Ovary (tissue), 10 donors: ENCODE measurements at regions of chr20 and their contacts with region 1.

Region 1: GRCh38 chr20:62302341-62303058 is at the start of gene ADRM1:
- DNase-seq: peak; percentile 94 to 98 (median 95)
- H3K4me3 ChIP-seq: peak within 1 kb of the TSS; percentile 88
- H3K27ac ChIP-seq: peak within 1 kb of the TSS; percentile 88 to 98
- H3K4me1 ChIP-seq: peaks cover 11% of the 10 kb centered on the region
- H3K27me3 ChIP-seq: no peaks in the 10 kb centered on the region
- CTCF ChIP-seq: peak; percentile 87 to 99 (median 98)
- EP300 ChIP-seq: no peak
- POLR2A ChIP-seq: peak; percentile 37
- total RNA-seq, gene ADRM1: 42.8 to 109 (median 56.3) TPM

Region 2: DNA sequence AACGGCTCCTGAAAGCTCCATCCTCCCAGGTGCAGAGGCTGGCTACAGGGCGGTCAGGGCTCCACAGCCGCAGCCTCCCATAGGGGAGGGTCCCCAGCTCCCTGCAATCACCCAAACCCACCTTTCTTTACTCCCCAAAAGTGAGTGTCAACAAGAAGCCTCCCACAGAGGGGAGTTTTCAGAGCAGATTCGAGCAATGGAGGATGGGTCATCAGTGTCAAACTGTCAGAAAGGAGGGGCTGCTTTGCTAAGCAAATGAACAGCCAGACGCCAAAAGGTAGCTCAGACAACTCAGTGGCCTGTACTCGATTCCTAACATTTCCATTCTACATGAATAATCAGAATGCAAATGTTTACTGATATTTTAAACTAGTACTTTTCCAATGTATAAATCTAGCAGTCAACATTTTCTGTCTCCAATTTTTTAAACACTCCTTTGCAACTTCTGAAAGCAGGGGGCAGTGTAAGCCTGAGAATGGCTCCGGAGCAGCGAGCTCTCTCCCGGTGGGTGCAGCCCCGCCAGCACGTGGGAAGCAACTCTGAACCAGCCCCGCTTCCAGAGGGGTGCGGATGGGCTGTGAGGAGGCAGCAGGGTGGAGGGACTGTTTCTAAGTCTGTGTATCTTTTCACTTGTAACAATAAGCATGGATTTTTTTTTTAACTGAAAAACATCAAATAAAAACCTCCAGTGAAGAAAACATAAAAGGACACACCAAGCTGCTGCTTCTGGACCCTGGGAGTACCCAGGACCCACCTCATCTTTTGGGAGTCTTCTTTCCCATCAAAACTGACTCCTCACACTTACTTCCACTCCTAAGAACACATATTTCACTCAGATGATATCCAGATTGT is 291.7 kb before region 1 on chr20:
- intact Hi-C with region 1: loop called in 1 of 4 experiments (anchors 10 kb)
- DNase-seq: peak; percentile 54 to 72 (median 70)
- H3K4me3 ChIP-seq: no peak overlapping the region
- H3K27ac ChIP-seq: no peak overlapping the region
- H3K4me1 ChIP-seq: peaks cover 2% of the 10 kb centered on the region
- H3K27me3 ChIP-seq: no peaks in the 10 kb centered on the region
- CTCF ChIP-seq: peak; percentile 32 to 68 (median 60)
- EP300 ChIP-seq: no peak
- POLR2A ChIP-seq: no peak

Region 3: DNA sequence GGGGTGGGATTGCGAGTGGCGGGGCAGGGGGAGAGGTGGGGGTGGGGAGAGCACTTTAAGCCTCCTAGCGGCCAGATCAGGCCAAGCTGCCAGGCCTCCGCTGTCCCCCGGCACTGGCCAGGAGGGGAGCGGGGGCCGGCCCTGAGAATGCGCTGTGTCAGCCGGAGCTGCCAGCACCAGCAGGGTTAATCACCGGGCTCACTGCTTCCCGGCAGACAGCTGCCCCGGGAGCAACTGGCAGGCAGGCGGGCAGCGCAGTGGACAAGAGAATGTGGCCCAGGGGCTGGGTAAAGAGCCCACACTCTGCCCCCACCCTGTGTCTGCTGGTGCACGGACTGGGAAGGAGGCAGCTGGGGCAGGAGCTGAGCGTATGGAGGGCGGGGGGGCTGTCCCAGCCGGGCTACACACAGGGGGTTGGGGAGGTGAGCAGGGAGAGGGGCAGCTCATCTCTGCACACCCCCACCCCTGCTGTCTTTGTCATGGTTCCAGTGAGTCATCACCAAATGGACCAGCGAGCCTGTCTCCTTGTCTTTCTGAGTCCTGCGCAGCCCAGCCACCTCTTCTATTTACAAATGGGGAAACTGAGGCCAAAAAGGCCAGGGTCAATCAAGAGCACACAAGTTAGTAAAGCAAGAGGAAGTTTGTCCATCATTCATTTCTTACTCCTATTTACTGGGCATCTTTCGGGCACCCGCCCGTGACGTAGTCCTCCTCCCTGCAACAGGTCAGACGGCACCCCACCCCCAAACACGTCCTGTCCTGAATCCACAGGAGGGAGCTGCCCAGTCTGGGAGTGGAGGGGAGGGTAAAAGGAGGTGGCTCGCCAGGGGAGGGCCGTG is 66.7 kb after region 1 on chr20:
- intact Hi-C with region 1: loop called in 1 of 4 experiments (anchors 10 kb)
- DNase-seq: no peak
- H3K4me3 ChIP-seq: peak overlapping the region; percentile 10
- H3K27ac ChIP-seq: no peak overlapping the region
- H3K4me1 ChIP-seq: peaks cover 13% of the 10 kb centered on the region
- H3K27me3 ChIP-seq: peaks cover 5% of the 10 kb centered on the region
- CTCF ChIP-seq: no peak
- EP300 ChIP-seq: no peak
- POLR2A ChIP-seq: no peak

Region 4: GRCh38 chr20:62376112-62377063 is 73.9 kb after region 1 on chr20:
- intact Hi-C with region 1: loop called in 2 of 4 experiments (anchors 2 to 5 kb)
- DNase-seq: peak in 4 of 5 donors; percentile 63 to 78 (median 66)
- H3K4me3 ChIP-seq: no peak overlapping the region
- H3K27ac ChIP-seq: no peak overlapping the region
- H3K4me1 ChIP-seq: peaks cover 17% of the 10 kb centered on the region
- H3K27me3 ChIP-seq: no peaks in the 10 kb centered on the region
- CTCF ChIP-seq: peak; percentile 20 to 40 (median 34)
- EP300 ChIP-seq: no peak
- POLR2A ChIP-seq: no peak

Region 5: DNA sequence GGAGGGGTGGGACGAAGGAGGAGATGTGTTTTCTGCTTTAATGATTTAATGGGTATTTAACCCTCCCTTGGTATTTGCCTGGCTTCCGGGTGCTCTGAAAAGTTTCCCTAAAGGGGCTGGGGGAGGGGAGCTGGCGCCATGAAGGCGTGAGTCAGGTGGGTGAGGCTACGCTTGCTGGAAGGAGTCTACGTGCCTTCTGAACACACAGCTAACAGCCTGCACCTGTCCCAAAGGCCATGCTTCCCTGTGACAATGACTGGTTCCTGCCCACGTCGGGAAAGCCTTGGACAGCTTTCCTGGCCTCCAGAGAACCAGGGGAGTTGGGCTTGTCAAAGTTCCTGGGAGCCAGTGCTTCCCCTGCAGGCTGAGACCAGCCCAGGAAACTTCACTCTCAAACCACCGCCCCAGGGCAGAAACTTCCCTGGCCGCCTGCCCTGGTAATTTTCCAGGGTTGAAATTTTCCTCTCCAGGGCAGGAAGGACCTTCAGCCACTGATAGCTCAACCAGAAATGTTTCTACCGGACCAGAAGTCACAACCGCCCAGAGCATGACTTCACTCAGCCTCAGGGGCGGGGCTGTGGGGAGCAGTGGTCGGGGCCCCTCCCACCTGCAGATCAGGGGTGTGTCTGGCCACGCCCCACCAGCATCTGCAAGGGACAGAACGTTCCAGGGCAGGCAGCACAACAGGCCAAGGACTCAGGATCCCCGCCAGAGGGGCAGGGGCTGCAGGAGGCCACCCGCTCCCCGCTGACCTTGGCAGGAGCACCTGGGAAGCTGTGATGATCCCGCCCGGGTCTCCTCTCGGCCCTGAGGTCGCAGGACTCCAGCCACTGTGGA is 321.2 kb after region 1 on chr20:
- intact Hi-C with region 1: loop called in 1 of 4 experiments (anchors 5 kb)
- DNase-seq: peak; percentile 86 to 96 (median 95)
- H3K4me3 ChIP-seq: no peak overlapping the region
- H3K27ac ChIP-seq: peak overlapping the region; percentile 58 to 91
- H3K4me1 ChIP-seq: peaks cover 13% of the 10 kb centered on the region
- H3K27me3 ChIP-seq: no peaks in the 10 kb centered on the region
- CTCF ChIP-seq: peak in 1 of 3 donors; percentile 28
- EP300 ChIP-seq: peak; percentile 27
- POLR2A ChIP-seq: peak; percentile 22

Region 6: GRCh38 chr20:62793912-62794724 is 491.6 kb after region 1 on chr20:
- intact Hi-C with region 1: loop called in 1 of 4 experiments (anchors 5 kb)
- DNase-seq: peak; percentile 97 to 99 (median 98)
- H3K4me3 ChIP-seq: peak overlapping the region; percentile 78
- H3K27ac ChIP-seq: peak overlapping the region; percentile 92
- H3K4me1 ChIP-seq: peaks cover 7% of the 10 kb centered on the region
- H3K27me3 ChIP-seq: no peaks in the 10 kb centered on the region
- CTCF ChIP-seq: peak in 1 of 3 donors; percentile 17
- EP300 ChIP-seq: no peak
- POLR2A ChIP-seq: peak; percentile 94